AG04450 (cell line): ENCODE measurements at regions of chr19 and their contacts with region 1.

Region 1: GRCh38 chr19:1241417-1242095 is at the start of gene ATP5F1D:
- DNase-seq: peak; percentile 89
- H3K4me3 ChIP-seq: peak within 1 kb of the TSS; percentile 77
- H3K27ac ChIP-seq: peak within 1 kb of the TSS; percentile 57
- H3K27me3 ChIP-seq: no peaks in the 10 kb centered on the region
- CTCF ChIP-seq: no peak
- polyA plus RNA-seq, gene ATP5F1D: 36.4 and 55.1 TPM in 2 replicates

Region 2: DNA sequence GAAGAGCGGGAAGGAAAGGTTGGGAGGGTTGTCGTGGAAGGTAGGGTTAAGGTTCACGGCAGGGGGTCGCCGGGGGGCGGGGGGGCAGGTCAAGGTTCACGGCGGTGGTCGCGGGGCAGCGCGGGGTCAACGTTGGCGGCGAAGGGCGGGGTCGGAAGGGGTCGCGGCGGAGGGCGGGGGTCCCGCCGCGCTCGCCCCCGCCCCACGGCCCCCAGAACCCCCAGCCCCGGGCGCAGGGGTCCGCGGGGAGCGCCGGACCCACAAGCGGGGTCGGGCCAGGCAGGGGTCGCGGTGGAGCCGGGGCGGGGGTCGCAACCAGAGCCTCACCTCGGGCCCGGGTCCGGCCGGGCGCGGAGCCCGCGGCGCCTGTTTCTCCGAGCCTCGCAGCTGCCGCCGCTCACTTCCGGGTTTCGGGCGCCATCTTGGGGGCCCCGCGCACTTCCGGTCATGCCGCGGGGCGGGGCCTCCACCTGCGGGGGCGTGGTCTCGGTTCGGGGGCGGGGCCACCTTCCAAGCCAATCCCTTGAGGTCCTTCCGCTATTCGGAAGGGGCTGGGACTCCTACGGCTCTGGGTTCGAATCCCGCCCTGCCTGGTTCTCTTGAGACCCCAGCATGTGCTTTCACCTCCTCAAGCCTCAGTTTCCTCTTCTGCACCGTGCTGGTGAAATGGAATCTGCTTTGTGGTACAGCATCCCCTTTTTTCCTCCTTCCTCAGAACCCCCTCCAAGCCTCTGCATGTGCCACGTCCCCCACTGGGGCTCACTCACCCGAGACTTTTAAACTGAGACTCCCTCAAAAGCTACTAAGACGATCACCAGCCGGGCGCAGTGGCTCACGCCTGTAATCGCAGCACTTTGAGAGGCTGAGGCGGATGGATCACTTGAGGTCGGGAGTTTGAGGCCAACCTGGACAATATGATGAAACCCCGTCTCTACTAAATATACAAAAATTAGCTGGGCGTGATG is 67.4 kb before region 1 on chr19 and contains the start of gene SBNO2:
- CTCF ChIA-PET with region 1: interaction called, 3 read pairs
- POLR2A ChIA-PET with region 1: interaction called, 13 read pairs
- DNase-seq: no peak
- H3K4me3 ChIP-seq: peak within 1 kb of the TSS; percentile 92
- H3K27ac ChIP-seq: peak within 1 kb of the TSS; percentile 83
- H3K27me3 ChIP-seq: no peaks in the 10 kb centered on the region
- CTCF ChIP-seq: no peak
- polyA plus RNA-seq, gene SBNO2: 9.9 and 14.2 TPM in 2 replicates

Region 3: GRCh38 chr19:1221141-1221903 is 20.2 kb before region 1 on chr19:
- CTCF ChIA-PET with region 1: interaction called, 12 read pairs
- POLR2A ChIA-PET with region 1: no interaction called
- DNase-seq: no peak
- H3K4me3 ChIP-seq: no peak overlapping the region
- H3K27ac ChIP-seq: peak overlapping the region; percentile 11
- H3K27me3 ChIP-seq: no peaks in the 10 kb centered on the region
- CTCF ChIP-seq: peak; percentile 60

Region 4: DNA sequence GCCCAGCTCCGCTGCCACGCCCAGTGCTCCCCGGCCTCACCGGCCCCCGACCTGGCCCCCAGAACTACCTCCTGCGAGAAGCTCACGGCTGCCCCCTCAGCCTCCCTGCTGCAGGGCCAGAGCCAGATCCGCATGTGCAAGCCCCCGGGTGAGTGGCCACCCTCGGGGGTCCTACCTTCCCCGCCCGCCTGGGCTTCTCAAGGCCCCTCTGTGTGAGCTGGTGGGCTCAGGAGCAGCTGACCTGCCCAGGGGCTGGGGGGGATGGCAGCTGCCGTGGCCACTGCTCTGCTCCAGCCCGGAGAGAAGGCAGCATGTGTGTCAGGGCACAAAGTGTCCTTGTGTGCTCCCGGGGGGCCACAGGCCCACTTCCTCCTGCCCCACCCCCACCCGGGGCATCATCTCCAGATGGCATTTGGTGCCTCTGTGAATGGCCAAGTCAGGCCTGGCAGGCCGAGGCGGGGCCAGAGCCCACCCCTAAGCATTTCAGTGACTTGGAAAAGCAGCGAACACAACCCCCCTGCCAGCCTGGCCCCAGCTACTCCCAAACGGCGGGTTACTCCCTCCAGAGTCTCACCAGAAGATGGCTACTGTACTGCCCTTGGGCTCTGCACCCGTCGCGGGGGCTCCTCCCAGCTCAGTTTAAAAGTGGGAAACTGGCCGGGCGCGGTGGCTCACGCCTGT is 14.1 kb after region 1 on chr19:
- CTCF ChIA-PET with region 1: interaction called, 16 read pairs
- POLR2A ChIA-PET with region 1: interaction called, 21 read pairs
- DNase-seq: no peak
- H3K4me3 ChIP-seq: no peak overlapping the region
- H3K27ac ChIP-seq: peak overlapping the region; percentile 61
- H3K27me3 ChIP-seq: no peaks in the 10 kb centered on the region
- CTCF ChIP-seq: no peak

Region 5: GRCh38 chr19:1275260-1275975 is 33.9 kb after region 1 on chr19 and contains the start of gene FAM174C:
- CTCF ChIA-PET with region 1: interaction called, 12 read pairs
- POLR2A ChIA-PET with region 1: interaction called, 13 read pairs
- DNase-seq: peak; percentile 90
- H3K4me3 ChIP-seq: peak within 1 kb of the TSS; percentile 75
- H3K27ac ChIP-seq: peak within 1 kb of the TSS; percentile 91
- H3K27me3 ChIP-seq: no peaks in the 10 kb centered on the region
- CTCF ChIP-seq: no peak
- polyA plus RNA-seq, gene FAM174C: 16.6 and 29.1 TPM in 2 replicates

Region 6: DNA sequence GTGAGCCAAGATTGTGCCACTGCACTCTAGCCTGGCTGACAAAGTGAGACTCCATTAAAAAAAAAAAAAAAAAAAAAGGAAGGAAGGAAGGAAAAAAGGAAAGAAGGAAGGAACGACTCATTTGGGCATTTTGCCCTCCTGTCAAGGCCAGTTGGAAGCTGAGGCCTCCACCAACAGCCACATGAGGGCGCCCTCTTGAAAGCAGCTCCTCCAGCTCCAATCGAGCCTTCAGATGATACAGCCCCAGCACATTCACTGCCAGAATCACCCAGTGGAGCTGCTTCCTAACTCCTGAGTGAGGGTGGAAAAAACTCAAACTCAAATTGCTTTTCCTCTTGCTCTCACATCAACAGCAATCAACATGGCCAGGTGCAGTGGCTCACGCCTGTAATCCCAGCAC is 1420.1 kb after region 1 on chr19:
- CTCF ChIA-PET with region 1: interaction called, 13 read pairs
- POLR2A ChIA-PET with region 1: no interaction called
- DNase-seq: no peak
- H3K4me3 ChIP-seq: no peak overlapping the region
- H3K27ac ChIP-seq: no peak overlapping the region
- H3K27me3 ChIP-seq: peaks cover 7% of the 10 kb centered on the region
- CTCF ChIP-seq: no peak